ENCODE measurements at regions of chr20 and their contacts with region 1.

Region 1: GRCh38 chr20:3781153-3781910 is at the start of gene SPEF1:
- DNase-seq: peak; percentile 75 to 89 (median 80)
- ATAC-seq: peak; percentile 87
- H3K4me3 ChIP-seq: peak within 1 kb of the TSS; percentile 42
- H3K27ac ChIP-seq: no peak within 1 kb of the TSS; the same call in 2 of the 3 replicates
- H3K4me1 ChIP-seq: peaks cover 8 to 54% of the 10 kb centered on the region in 2 experiments; a peak in 3 of 5 replicates
- H3K27me3 ChIP-seq: no peaks in the 10 kb centered on the region
- CTCF ChIP-seq: peak; percentile 50 to 60 (median 51)
- EP300 ChIP-seq: no peak
- POLR2A ChIP-seq: no peak
- RAD21 ChIP-seq: peak in 1 of 2 experiments; percentile 54; a peak in 2 of 4 replicates
- polyA plus RNA-seq, gene SPEF1: not detected

Region 2: GRCh38 chr20:3716195-3716834 is 65.0 kb before region 1 on chr20:
- CTCF ChIA-PET with region 1: no interaction called
- POLR2A ChIA-PET with region 1: no interaction called
- in situ Hi-C with region 1: no loop called
- intact Hi-C with region 1: loop called (anchors 1 kb)
- DNase-seq: peak; percentile 46 to 63 (median 56)
- ATAC-seq: peak; percentile 96
- H3K4me3 ChIP-seq: no peak overlapping the region
- H3K27ac ChIP-seq: no peak overlapping the region
- H3K4me1 ChIP-seq: peaks cover 0 to 3% of the 10 kb centered on the region in 2 experiments; a peak in 3 of 5 replicates
- H3K27me3 ChIP-seq: peaks cover 0 to 5% of the 10 kb centered on the region in 2 experiments; a peak in 1 of 5 replicates
- CTCF ChIP-seq: peak; percentile 78 to 83 (median 80)
- EP300 ChIP-seq: no peak
- POLR2A ChIP-seq: no peak
- RAD21 ChIP-seq: peak; percentile 78 to 85

Region 3: GRCh38 chr20:3753098-3753980 is 28.0 kb before region 1 on chr20:
- CTCF ChIA-PET with region 1: no interaction called
- POLR2A ChIA-PET with region 1: no interaction called
- in situ Hi-C with region 1: no loop called
- intact Hi-C with region 1: loop called (anchors 1 kb)
- DNase-seq: peak; percentile 46 to 63 (median 48)
- ATAC-seq: peak; percentile 85
- H3K4me3 ChIP-seq: no peak overlapping the region
- H3K27ac ChIP-seq: no peak overlapping the region
- H3K4me1 ChIP-seq: peaks cover 0 to 20% of the 10 kb centered on the region in 2 experiments; a peak in 2 of 5 replicates
- H3K27me3 ChIP-seq: no peaks in the 10 kb centered on the region
- CTCF ChIP-seq: peak; percentile 55 to 71 (median 71)
- EP300 ChIP-seq: no peak
- POLR2A ChIP-seq: no peak
- RAD21 ChIP-seq: peak; percentile 28 to 57; a peak in 3 of 4 replicates

Measured in K562 (cell line).